ENCODE measurements at regions of chr5 and their contacts with region 1.

Region 1: DNA sequence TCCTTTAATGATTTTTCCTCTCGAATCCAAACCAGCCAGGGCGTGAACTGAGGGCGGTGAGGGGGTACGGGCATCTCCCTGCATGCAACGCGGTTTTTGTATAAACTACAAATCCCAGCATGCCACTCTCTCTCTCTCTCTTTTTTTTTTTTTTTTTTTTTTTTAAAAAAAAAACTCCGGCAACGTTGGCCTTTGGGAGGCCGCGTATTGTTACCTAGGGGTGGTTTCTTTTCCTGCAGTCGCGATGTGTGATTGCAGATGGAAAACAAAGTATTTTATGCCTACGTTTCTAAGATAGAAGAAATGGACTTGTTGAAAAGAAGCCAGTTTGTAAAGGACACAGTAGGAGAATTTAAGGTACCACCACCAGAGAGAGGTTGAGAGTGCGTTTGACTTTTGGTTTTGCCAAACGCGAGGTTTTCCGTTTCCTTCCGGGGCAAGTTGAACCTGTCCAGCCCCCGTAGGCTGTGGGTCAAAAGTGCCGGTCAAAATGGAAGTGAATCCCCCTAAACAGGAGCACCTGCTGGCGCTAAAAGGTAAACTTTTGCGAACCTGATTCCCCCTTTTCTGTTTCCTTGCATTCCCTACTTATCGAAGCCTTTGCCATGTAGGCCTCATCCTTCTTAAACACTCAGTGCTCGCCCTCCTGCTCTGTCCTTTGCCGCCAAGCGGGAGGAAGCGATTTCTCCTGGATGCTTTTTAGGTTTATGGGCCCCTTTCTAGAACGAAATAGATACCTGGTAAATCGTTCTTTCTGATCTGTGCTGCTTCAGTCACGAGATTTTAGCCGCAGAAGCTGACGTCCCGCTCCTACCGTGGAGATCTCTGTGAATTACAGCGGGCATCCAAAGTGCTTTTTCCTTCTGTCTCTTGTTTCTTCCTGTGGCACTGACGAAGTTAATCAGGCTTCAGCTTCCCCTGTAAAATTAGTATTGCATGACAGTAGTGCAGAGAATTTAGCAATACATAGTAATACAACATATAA is at the starts of genes SHLD3 and TRAPPC13:
- DNase-seq: peak; percentile 88
- total RNA-seq, gene SHLD3: 1.7 TPM
- total RNA-seq, gene TRAPPC13: 18.9 TPM

Region 2: GRCh38 chr5:65525726-65526125 is 99.1 kb before region 1 on chr5:
- intact Hi-C with region 1: no loop called
- DNase-seq: no peak

Region 3: GRCh38 chr5:65562731-65563701 is 61.8 kb before region 1 on chr5 and contains the starts of genes CENPK and PPWD1:
- intact Hi-C with region 1: loop called (anchors 5 kb)
- DNase-seq: peak; percentile 97
- total RNA-seq, gene CENPK: 0.73 TPM
- total RNA-seq, gene PPWD1: 19.3 TPM

Region 4: DNA sequence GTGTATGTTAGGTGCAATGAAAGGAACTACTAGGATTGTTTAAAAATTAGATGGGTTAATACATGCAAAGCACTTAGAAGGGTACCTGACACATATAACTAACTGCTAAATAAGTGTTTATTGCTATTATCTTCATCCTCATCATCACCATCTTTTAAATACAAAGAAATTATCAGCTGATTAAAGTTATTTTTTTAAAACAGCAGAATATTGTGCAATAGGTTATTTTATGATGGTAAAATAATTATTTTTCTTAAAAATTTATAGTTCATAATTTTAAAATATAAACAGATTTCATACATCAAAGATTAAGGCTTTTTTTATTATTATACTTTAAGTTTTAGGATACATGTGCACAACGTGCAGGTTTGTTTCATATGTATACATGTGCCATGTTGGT is 432.4 kb after region 1 on chr5:
- intact Hi-C with region 1: no loop called
- DNase-seq: no peak

Measured in cardiac septum (tissue), 1 donor.